ENCODE measurements at regions of chr1 and their contacts with region 1.

Region 1: GRCh38 chr1:44807262-44808062 is at the start of gene DYNLT4:
- DNase-seq: peak; percentile 78 to 96 (median 95)
- ATAC-seq: peak; percentile 68
- H3K4me3 ChIP-seq: peak within 1 kb of the TSS; percentile 48
- H3K4me3 Mint-ChIP-seq: peak within 1 kb of the TSS; percentile 63 to 90 (median 80)
- H3K27ac ChIP-seq: peak within 1 kb of the TSS; percentile 91
- H3K27ac Mint-ChIP-seq: peak within 1 kb of the TSS; percentile 98 to 100 (median 99)
- H3K4me1 ChIP-seq: peaks cover 66 to 67% of the 10 kb centered on the region in 2 donors
- H3K4me1 Mint-ChIP-seq: peaks cover 53 to 84% (median 77%) of the 10 kb centered on the region in 7 donors
- H3K27me3 ChIP-seq: no peaks in the 10 kb centered on the region
- H3K27me3 Mint-ChIP-seq: peaks cover 0 to 3% (median 0%) of the 10 kb centered on the region in 5 donors
- total RNA-seq, gene DYNLT4: 0.31 to 9.7 (median 0.87) TPM

Region 2: GRCh38 chr1:44786138-44786840 is 21.2 kb before region 1 on chr1:
- CTCF ChIA-PET with region 1: interaction called, 4 read pairs
- POLR2A ChIA-PET with region 1: interaction called, 50 read pairs
- intact Hi-C with region 1: no loop called
- DNase-seq: peak; percentile 69 to 85 (median 76)
- ATAC-seq: peak; percentile 90
- H3K4me3 ChIP-seq: peak overlapping the region; percentile 64
- H3K4me3 Mint-ChIP-seq: peak overlapping the region; percentile 60 to 82 (median 75)
- H3K27ac ChIP-seq: peak overlapping the region; percentile 58
- H3K27ac Mint-ChIP-seq: peak overlapping the region in 8 of 9 donors; percentile 51 to 80 (median 72)
- H3K4me1 ChIP-seq: peaks cover 20 to 25% of the 10 kb centered on the region in 2 donors
- H3K4me1 Mint-ChIP-seq: peaks cover 13 to 35% (median 27%) of the 10 kb centered on the region in 7 donors
- H3K27me3 ChIP-seq: no peaks in the 10 kb centered on the region
- H3K27me3 Mint-ChIP-seq: no peaks in the 10 kb centered on the region

Measured in naive thymus-derived CD4-positive, alpha-beta T cell (primary cell).